ENCODE measurements at regions of chr17 and their contacts with region 1.

Region 1: GRCh38 chr17:74736513-74737298 is at the start of gene RAB37:
- DNase-seq: no peak
- H3K4me3 ChIP-seq: no peak within 1 kb of the TSS
- H3K27ac ChIP-seq: no peak within 1 kb of the TSS
- H3K4me1 ChIP-seq: no peaks in the 10 kb centered on the region
- H3K27me3 ChIP-seq: peaks cover 29 to 39% of the 10 kb centered on the region in 2 experiments
- CTCF ChIP-seq: peak in 1 of 2 donors; percentile 41
- POLR2A ChIP-seq: no peak
- total RNA-seq, gene RAB37: 0.21 TPM in 1 of 2 replicates, not detected in the other

Region 2: GRCh38 chr17:74566132-74566753 is 170.5 kb before region 1 on chr17:
- CTCF ChIA-PET with region 1: no interaction called
- POLR2A ChIA-PET with region 1: no interaction called
- dilution Hi-C with region 1: no loop called
- intact Hi-C with region 1: loop called (anchors 2 kb)
- DNase-seq: peak; percentile 5
- H3K4me3 ChIP-seq: no peak overlapping the region
- H3K27ac ChIP-seq: no peak overlapping the region
- H3K4me1 ChIP-seq: no peaks in the 10 kb centered on the region
- H3K27me3 ChIP-seq: no peaks in the 10 kb centered on the region
- CTCF ChIP-seq: peak; percentile 31 to 45
- POLR2A ChIP-seq: no peak

Measured in endothelial cell of umbilical vein (primary cell).